WTC11 (cell line): ENCODE measurements at regions of chr4 and their contacts with region 1.

Region 1: GRCh38 chr4:109419679-109420078 is 13.9 kb upstream of the SEC24B start:
- DNase-seq: peak; percentile 35
- ATAC-seq: peak; percentile 22
- H3K4me3 Mint-ChIP-seq: no peak overlapping the region; the same call in 1 of the 2 replicates
- H3K27ac Mint-ChIP-seq: peak overlapping the region; percentile 78
- H3K4me1 Mint-ChIP-seq: peaks cover 40% of the 10 kb centered on the region
- H3K27me3 Mint-ChIP-seq: no peaks in the 10 kb centered on the region
- CTCF ChIP-seq: no peak

Region 2: GRCh38 chr4:109433205-109434006 is 13.7 kb after region 1 on chr4 and contains the start of gene SEC24B:
- CTCF ChIA-PET with region 1: interaction called, 20 read pairs
- POLR2A ChIA-PET with region 1: no interaction called
- DNase-seq: peak; percentile 88
- ATAC-seq: peak; percentile 88
- H3K4me3 Mint-ChIP-seq: peak within 1 kb of the TSS; percentile 80
- H3K27ac Mint-ChIP-seq: peak within 1 kb of the TSS; percentile 79; the same call in 1 of the 2 replicates
- H3K4me1 Mint-ChIP-seq: peaks cover 45% of the 10 kb centered on the region
- H3K27me3 Mint-ChIP-seq: no peaks in the 10 kb centered on the region
- CTCF ChIP-seq: peak; percentile 96
- total RNA-seq, gene SEC24B: 21.6 to 24.0 TPM (median 22.4 TPM) in 3 replicates